ENCODE measurements at regions of chr7 and their contacts with region 1.

Region 1: GRCh38 chr7:33471636-33472242 is 342.4 kb downstream of the BBS9 start:
- DNase-seq: no peak
- H3K4me3 ChIP-seq: no peak overlapping the region
- CTCF ChIP-seq: no peak
- POLR2A ChIP-seq: no peak

Region 2: DNA sequence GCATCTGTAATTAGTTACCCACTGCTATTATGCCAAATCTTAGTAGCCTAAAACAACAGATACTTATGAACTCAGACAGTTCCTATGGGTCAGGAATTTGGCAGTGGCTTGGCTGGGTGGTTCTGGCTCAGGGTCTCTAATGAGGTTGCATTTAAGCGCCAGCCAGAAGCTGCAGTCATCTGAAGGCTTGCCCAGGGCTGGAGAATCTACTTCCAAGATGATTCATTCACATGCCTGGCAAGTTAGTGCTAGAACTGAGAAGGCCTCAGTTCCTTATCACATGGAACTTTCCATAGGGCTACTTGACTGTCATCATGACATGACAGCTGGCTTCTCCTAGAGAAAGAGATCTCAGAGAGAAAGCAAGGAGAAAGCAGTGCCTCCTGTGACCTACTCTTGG is 855.1 kb before region 1 on chr7:
- intact Hi-C with region 1: loop called (anchors 5 kb)
- DNase-seq: peak; percentile 61 to 87
- H3K4me3 ChIP-seq: no peak overlapping the region
- CTCF ChIP-seq: no peak
- POLR2A ChIP-seq: no peak